ENCODE measurements at regions of chr9 and their contacts with region 1.

Region 1: GRCh38 chr9:91711755-91712601 is 238.1 kb downstream of the ROR2 start:
- DNase-seq: no peak
- ATAC-seq: no peak
- H3K4me3 ChIP-seq: no peak overlapping the region
- H3K27ac ChIP-seq: no peak overlapping the region
- H3K4me1 ChIP-seq: no peaks in the 10 kb centered on the region
- H3K27me3 ChIP-seq: peaks cover 0 to 22% (median 8%) of the 10 kb centered on the region in 3 donors
- CTCF ChIP-seq: no peak

Region 2: DNA sequence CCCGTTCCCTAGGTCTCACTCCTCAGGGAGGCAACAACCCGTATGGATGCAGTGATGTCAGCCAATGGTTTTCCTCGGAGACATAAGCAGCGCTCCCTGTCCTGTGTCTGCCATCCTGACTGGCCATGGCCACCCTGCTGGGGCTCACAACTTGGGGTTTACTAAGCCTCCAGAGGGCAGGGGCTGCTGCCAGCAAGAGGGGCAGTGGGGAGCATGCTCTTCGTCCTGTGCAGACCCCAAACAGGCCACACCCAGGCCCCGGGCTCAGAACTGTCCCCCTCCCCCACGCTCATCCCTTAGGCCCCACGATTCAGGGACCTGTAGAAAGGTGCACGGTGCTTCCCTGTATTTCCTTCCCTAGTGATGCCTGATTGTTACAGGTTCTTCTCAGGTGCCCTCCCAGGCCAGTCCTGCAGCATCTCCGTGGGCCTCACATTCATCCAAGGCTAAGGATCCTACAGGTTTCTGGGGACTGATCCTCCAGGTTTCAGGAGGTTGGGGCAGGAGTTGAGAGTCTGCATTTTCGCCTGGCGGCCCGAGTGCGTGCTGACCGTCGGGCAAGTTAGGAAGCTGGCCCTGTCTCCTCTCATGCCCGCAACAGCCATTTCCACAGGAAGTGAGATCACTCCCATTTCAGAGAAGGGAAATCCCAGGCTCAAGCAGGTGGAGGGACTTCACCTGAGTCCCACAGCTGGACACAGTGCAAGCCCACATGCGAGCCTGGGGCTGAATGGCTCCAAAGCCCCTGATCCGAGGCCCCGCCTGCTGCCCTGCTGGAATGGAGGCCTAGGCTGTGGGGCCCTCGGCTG is 20.4 kb after region 1 on chr9:
- intact Hi-C with region 1: loop called in 1 of 2 experiments (anchors 2 kb)
- DNase-seq: no peak
- ATAC-seq: no peak
- H3K4me3 ChIP-seq: no peak overlapping the region
- H3K27ac ChIP-seq: no peak overlapping the region
- H3K4me1 ChIP-seq: no peaks in the 10 kb centered on the region
- H3K27me3 ChIP-seq: no peaks in the 10 kb centered on the region
- CTCF ChIP-seq: no peak

Measured in psoas muscle (tissue), 8 donors.